AG04450 (cell line): ENCODE measurements at regions of chr10 and their contacts with region 1.

Region 1: DNA sequence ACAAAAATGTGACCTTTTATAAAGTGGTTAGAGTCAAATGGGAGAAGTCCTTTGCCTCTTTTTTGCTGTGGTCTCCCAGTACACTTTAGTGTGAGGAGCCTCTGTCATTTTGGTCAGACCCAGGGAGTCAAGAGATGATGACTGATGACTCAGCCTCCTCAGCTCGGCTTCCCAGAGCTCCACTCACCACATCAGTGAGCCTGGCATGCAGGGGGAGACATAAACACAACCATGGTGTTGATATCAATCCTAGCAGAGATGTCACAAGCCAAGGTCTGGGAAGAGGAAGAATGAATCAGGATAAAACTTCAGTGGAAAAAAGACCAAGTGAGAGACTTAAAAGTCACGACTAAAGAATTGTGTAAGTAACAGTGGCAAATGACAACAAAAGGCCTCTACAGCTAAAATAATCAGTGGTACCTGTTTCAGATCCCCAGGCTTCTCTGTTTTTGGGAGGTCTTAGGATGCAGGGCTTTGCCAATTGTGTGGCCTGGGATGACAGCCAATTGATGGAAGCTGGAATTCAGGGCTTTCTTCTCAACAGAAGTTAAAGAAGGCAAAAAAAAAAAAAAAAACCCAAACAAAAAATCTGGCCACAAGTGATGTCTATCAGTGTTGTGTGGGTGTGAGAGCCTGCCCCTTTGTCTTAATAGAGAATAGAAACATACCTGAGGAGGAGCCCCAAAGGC is 50.2 kb downstream of the TFAM start:
- DNase-seq: peak; percentile 87
- H3K4me3 ChIP-seq: no peak overlapping the region
- H3K27ac ChIP-seq: peak overlapping the region; percentile 87
- H3K27me3 ChIP-seq: no peaks in the 10 kb centered on the region
- CTCF ChIP-seq: no peak

Region 2: GRCh38 chr10:58201704-58202103 is 233.7 kb before region 1 on chr10:
- CTCF ChIA-PET with region 1: no interaction called
- POLR2A ChIA-PET with region 1: interaction called, 10 read pairs
- DNase-seq: no peak
- H3K4me3 ChIP-seq: no peak overlapping the region
- H3K27ac ChIP-seq: no peak overlapping the region
- H3K27me3 ChIP-seq: no peaks in the 10 kb centered on the region
- CTCF ChIP-seq: no peak

Region 3: DNA sequence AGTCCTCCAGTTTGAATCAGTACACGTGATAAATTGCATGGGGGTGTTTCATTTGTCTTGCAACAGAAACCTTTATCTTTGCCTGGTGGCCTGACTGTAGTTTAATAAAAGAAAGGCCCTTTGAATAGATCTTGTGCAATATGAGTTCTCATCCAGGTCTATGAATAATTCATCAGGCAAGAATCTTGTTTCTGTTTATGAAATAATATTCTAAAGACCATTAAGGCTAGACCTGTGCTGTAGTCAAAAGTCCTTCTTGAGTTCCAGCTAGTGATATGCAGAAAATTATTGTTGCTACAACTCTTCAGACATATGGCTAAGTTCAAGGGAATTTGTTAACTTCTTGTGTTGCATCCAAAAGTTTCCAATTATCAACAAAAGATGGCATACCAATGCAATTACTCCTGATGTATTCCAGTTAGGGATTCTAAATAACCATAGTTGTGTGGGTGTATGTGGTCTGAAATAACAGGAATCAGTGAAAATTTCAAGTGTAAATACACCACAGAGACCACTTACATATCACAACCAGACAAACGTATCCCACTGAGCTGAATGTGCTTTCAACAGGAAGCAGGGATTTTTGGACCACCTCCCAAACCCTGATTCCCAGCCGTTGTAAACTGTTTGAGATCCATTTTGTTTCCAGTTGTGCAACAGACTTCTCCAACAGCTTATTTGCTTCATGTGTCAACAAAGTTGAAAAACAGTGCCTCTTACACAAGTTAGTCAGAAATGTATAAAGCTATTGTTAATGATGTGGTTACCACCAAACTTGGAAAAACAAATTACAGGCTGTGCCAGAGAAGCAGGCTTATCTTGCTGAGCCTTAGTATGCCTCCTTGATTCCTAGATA is 22.5 kb after region 1 on chr10:
- CTCF ChIA-PET with region 1: no interaction called
- POLR2A ChIA-PET with region 1: interaction called, 17 read pairs
- DNase-seq: peak; percentile 96
- H3K4me3 ChIP-seq: no peak overlapping the region
- H3K27ac ChIP-seq: peak overlapping the region; percentile 81
- H3K27me3 ChIP-seq: no peaks in the 10 kb centered on the region
- CTCF ChIP-seq: no peak

Region 4: DNA sequence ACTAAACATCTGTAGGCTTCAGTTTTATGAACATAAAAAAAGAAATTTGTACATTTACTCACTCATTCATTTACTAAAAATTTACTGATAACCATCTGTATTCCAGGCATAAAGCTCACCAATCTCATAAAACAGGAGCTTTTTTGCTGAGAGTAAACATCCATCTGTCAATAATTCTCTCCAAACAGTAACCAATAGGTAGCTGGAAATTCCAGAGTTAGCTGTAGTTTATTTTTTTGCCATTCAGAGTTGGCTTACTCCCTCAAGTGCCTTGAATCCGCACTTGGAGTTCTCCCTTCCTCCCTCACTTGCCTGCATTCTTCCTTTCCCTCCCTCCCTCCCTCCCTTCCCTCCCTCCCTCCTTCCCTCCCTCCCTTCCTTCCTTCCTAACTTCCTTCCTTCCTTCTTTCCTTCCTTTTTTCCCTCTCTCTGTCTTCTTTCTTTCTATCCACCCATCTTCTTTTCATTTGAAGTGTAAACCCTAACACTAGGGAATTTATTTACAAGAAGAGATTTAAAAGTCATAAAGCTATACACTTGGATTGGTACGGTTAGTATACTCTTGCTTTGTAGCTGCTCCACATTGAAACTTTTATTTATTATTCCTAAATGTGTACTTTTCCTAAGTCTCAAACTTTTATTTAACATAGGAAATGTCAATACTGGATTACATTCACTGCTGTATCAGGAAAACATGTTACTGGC is 32.6 kb after region 1 on chr10:
- CTCF ChIA-PET with region 1: no interaction called
- POLR2A ChIA-PET with region 1: no interaction called
- DNase-seq: no peak
- H3K4me3 ChIP-seq: no peak overlapping the region
- H3K27ac ChIP-seq: no peak overlapping the region
- H3K27me3 ChIP-seq: no peaks in the 10 kb centered on the region
- CTCF ChIP-seq: no peak

Region 5: GRCh38 chr10:58513188-58514110 is 78.0 kb after region 1 on chr10:
- CTCF ChIA-PET with region 1: interaction called, 4 read pairs
- POLR2A ChIA-PET with region 1: interaction called, 13 read pairs
- DNase-seq: peak; percentile 63
- H3K4me3 ChIP-seq: peak overlapping the region; percentile 86
- H3K27ac ChIP-seq: peak overlapping the region; percentile 87
- H3K27me3 ChIP-seq: no peaks in the 10 kb centered on the region
- CTCF ChIP-seq: no peak